Heart right ventricle (tissue), 16 donors: ENCODE measurements at regions of chr2 and their contacts with region 1.

Region 1: DNA sequence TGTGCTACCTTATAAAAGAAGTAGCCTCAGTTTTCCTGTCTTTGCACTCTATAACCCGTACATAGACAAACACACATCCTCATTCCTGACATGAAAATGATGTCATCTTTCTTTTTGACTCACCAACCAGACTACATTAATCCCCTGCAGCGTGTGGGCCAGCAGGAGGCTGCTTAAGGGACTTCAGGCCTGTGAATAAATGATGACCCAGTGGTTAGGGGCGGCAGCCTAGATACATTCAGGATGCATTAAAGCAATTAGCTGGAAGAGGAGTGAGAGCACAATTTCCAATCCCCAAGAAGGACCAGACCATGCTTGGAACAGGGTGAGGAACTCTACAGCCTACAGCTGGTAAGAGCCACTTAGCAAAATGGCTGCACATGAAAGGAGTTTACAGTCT is 57.3 kb upstream of the KLF7 start:
- DNase-seq: no peak
- ATAC-seq: no peak
- H3K4me3 ChIP-seq: no peak overlapping the region
- H3K27ac ChIP-seq: no peak overlapping the region
- H3K4me1 ChIP-seq: peaks cover 0 to 41% (median 38%) of the 10 kb centered on the region in 9 donors
- H3K27me3 ChIP-seq: no peaks in the 10 kb centered on the region
- CTCF ChIP-seq: no peak

Region 2: GRCh38 chr2:207066791-207067460 is 156.1 kb before region 1 on chr2:
- intact Hi-C with region 1: loop called in 1 of 10 experiments (anchors 10 kb)
- DNase-seq: no peak
- ATAC-seq: no peak
- H3K4me3 ChIP-seq: no peak overlapping the region
- H3K27ac ChIP-seq: peak overlapping the region in 1 of 10 donors; percentile 3
- H3K4me1 ChIP-seq: peaks cover 0 to 30% (median 14%) of the 10 kb centered on the region in 9 donors
- H3K27me3 ChIP-seq: no peaks in the 10 kb centered on the region
- CTCF ChIP-seq: no peak

Region 3: DNA sequence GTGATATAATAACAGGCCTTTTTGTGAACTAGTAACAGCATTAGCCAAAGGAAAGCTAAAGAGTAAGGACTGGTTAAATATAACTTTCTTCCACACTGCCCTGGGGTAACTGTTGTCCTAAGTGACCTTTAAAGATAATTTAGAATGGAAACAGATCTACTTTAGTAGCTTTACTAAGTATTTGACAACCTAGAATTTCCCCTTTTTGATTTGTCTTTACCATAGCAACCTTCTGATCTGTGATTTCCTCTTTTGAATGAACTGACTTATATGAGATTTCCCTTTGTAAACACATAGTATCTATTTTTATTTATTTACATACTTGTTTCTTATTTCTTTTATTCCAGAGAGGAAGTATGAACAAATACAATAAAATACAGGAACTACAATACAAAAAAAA is 46.8 kb before region 1 on chr2:
- intact Hi-C with region 1: loop called in 1 of 10 experiments (anchors 10 kb)
- DNase-seq: no peak
- ATAC-seq: no peak
- H3K4me3 ChIP-seq: no peak overlapping the region
- H3K27ac ChIP-seq: no peak overlapping the region
- H3K4me1 ChIP-seq: peaks cover 0 to 6% (median 0%) of the 10 kb centered on the region in 9 donors
- H3K27me3 ChIP-seq: no peaks in the 10 kb centered on the region
- CTCF ChIP-seq: no peak

Region 4: GRCh38 chr2:207188626-207189419 is 34.2 kb before region 1 on chr2:
- intact Hi-C with region 1: loop called in 1 of 10 experiments (anchors 5 kb)
- DNase-seq: no peak
- ATAC-seq: peak in 4 of 8 donors; percentile 21 to 73 (median 45)
- H3K4me3 ChIP-seq: no peak overlapping the region
- H3K27ac ChIP-seq: no peak overlapping the region
- H3K4me1 ChIP-seq: peaks cover 0 to 10% (median 0%) of the 10 kb centered on the region in 9 donors
- H3K27me3 ChIP-seq: no peaks in the 10 kb centered on the region
- CTCF ChIP-seq: no peak

Region 5: GRCh38 chr2:207265869-207266268 is 42.8 kb after region 1 on chr2:
- intact Hi-C with region 1: no loop called
- DNase-seq: no peak
- ATAC-seq: peak in 1 of 8 donors; percentile 52
- H3K4me3 ChIP-seq: no peak overlapping the region
- H3K27ac ChIP-seq: no peak overlapping the region
- H3K4me1 ChIP-seq: peaks cover 0 to 23% (median 13%) of the 10 kb centered on the region in 9 donors
- H3K27me3 ChIP-seq: no peaks in the 10 kb centered on the region
- CTCF ChIP-seq: no peak